IMR-90 (cell line): ENCODE measurements at regions of chr2 and their contacts with region 1.

Region 1: GRCh38 chr2:12856934-12857601 is 140.3 kb downstream of the TRIB2 start:
- DNase-seq: peak; percentile 75
- ATAC-seq: peak; percentile 71
- H3K4me3 ChIP-seq: no peak overlapping the region
- H3K27ac ChIP-seq: peak overlapping the region; percentile 92
- H3K4me1 ChIP-seq: peaks cover 16% of the 10 kb centered on the region
- H3K27me3 ChIP-seq: no peaks in the 10 kb centered on the region
- CTCF ChIP-seq: no peak
- POLR2A ChIP-seq: no peak
- RAD21 ChIP-seq: no peak

Region 2: DNA sequence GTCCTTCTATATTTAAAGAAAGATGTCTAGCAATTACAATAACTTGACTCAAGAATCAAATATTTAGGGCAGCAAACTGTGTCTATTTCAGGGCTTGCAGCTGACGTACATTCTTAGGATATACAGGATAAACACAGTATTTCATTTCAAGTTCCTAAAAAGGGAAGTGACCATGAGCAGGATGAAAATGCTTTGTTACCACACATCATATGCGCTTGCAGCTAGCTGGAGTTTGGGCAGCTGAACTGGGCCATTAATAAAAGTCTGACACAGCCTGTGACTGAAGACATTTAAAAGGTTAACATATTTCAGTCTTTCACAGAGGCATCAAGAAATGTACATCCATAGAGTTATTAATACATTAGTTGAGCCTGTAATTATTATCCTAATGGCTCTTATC is 404.9 kb before region 1 on chr2:
- CTCF ChIA-PET with region 1: no interaction called
- POLR2A ChIA-PET with region 1: no interaction called
- dilution Hi-C with region 1: no loop called
- in situ Hi-C with region 1: no loop called
- intact Hi-C with region 1: no loop called
- DNase-seq: peak; percentile 96
- ATAC-seq: peak; percentile 80
- H3K4me3 ChIP-seq: peak overlapping the region; percentile 20; the same call in 1 of the 2 replicates
- H3K27ac ChIP-seq: peak overlapping the region; percentile 100; the same call in 1 of the 2 replicates
- H3K4me1 ChIP-seq: peaks cover 24% of the 10 kb centered on the region
- H3K27me3 ChIP-seq: no peaks in the 10 kb centered on the region
- CTCF ChIP-seq: no peak
- POLR2A ChIP-seq: no peak
- RAD21 ChIP-seq: no peak

Region 3: GRCh38 chr2:12867631-12868287 is 10.7 kb after region 1 on chr2:
- CTCF ChIA-PET with region 1: no interaction called
- POLR2A ChIA-PET with region 1: interaction called, 3 read pairs
- dilution Hi-C with region 1: no loop called
- in situ Hi-C with region 1: no loop called
- intact Hi-C with region 1: loop called (anchors 1 kb)
- DNase-seq: peak; percentile 15
- ATAC-seq: peak; percentile 93
- H3K4me3 ChIP-seq: no peak overlapping the region
- H3K27ac ChIP-seq: no peak overlapping the region
- H3K4me1 ChIP-seq: peaks cover 7% of the 10 kb centered on the region
- H3K27me3 ChIP-seq: no peaks in the 10 kb centered on the region
- CTCF ChIP-seq: no peak
- POLR2A ChIP-seq: no peak
- RAD21 ChIP-seq: no peak

Region 4: DNA sequence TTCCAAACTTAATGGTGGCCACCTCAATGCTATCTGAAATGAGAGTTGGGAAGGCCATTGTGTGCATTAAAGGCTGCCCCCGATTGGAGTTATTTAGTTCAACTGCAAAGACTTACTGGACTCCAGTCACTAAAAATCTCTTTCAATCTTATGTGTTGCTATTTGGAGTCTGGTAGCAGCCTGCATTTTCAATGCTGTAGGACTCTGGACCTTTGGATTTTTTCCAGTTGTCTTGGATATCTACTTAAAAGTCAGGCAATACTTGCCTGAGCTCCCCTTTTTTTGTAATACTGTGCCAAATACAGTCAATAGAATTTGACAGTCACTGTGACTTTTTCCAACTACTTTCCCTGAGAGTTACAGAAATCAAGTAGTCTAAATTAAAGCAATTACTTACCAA is 141.6 kb after region 1 on chr2:
- CTCF ChIA-PET with region 1: no interaction called
- POLR2A ChIA-PET with region 1: no interaction called
- dilution Hi-C with region 1: no loop called
- in situ Hi-C with region 1: no loop called
- intact Hi-C with region 1: no loop called
- DNase-seq: no peak
- ATAC-seq: no peak
- H3K4me3 ChIP-seq: no peak overlapping the region
- H3K27ac ChIP-seq: no peak overlapping the region
- H3K4me1 ChIP-seq: no peaks in the 10 kb centered on the region
- H3K27me3 ChIP-seq: no peaks in the 10 kb centered on the region; the same call in 1 of the 2 replicates
- CTCF ChIP-seq: no peak
- POLR2A ChIP-seq: no peak
- RAD21 ChIP-seq: no peak